CD4-positive, alpha-beta memory T cell (primary cell): ENCODE measurements at regions of chr10 and their contacts with region 1.

Region 1: GRCh38 chr10:95183271-95184230 is 10.5 kb upstream of the ACSM6 start:
- DNase-seq: peak in 4 of 5 donors; percentile 38 to 55 (median 43)
- H3K4me3 ChIP-seq: peak overlapping the region in 1 of 2 donors; percentile 45
- H3K4me3 Mint-ChIP-seq: peak overlapping the region; percentile 59 to 83 (median 76)
- H3K27ac ChIP-seq: no peak overlapping the region
- H3K27ac Mint-ChIP-seq: peak overlapping the region in 2 of 7 donors; percentile 61 to 86
- H3K4me1 ChIP-seq: no peaks in the 10 kb centered on the region
- H3K4me1 Mint-ChIP-seq: peaks cover 0 to 8% (median 7%) of the 10 kb centered on the region in 4 donors
- H3K27me3 ChIP-seq: peaks cover 5% of the 10 kb centered on the region
- H3K27me3 Mint-ChIP-seq: peaks cover 15 to 20% of the 10 kb centered on the region in 2 donors

Region 2: GRCh38 chr10:95246579-95247051 is 63.1 kb after region 1 on chr10:
- CTCF ChIA-PET with region 1: no interaction called
- POLR2A ChIA-PET with region 1: no interaction called
- intact Hi-C with region 1: loop called (anchors 10 kb)
- DNase-seq: peak in 4 of 5 donors; percentile 20 to 39 (median 31)
- H3K4me3 ChIP-seq: no peak overlapping the region
- H3K4me3 Mint-ChIP-seq: no peak overlapping the region
- H3K27ac ChIP-seq: no peak overlapping the region
- H3K27ac Mint-ChIP-seq: no peak overlapping the region
- H3K4me1 ChIP-seq: no peaks in the 10 kb centered on the region
- H3K4me1 Mint-ChIP-seq: no peaks in the 10 kb centered on the region
- H3K27me3 ChIP-seq: peaks cover 5% of the 10 kb centered on the region
- H3K27me3 Mint-ChIP-seq: peaks cover 5 to 19% of the 10 kb centered on the region in 2 donors